Activated CD4-positive, alpha-beta T cell treated with anti-CD3 and anti-CD28 coated beads, Interleukin-2, amount 10 ng/mL, durations not matched to agents 7 days and 5 days (primary cell): ENCODE measurements at regions of chr20 and their contacts with region 1.

Region 1: GRCh38 chr20:45362804-45363610 is at the start of gene SYS1:
- DNase-seq: peak; percentile 99
- H3K4me3 Mint-ChIP-seq: peak within 1 kb of the TSS; percentile 92
- H3K27ac Mint-ChIP-seq: peak within 1 kb of the TSS; percentile 92
- H3K4me1 Mint-ChIP-seq: peaks cover 59% of the 10 kb centered on the region
- H3K27me3 Mint-ChIP-seq: no peaks in the 10 kb centered on the region
- total RNA-seq, gene SYS1: 23.9 to 25.6 TPM

Region 2: DNA sequence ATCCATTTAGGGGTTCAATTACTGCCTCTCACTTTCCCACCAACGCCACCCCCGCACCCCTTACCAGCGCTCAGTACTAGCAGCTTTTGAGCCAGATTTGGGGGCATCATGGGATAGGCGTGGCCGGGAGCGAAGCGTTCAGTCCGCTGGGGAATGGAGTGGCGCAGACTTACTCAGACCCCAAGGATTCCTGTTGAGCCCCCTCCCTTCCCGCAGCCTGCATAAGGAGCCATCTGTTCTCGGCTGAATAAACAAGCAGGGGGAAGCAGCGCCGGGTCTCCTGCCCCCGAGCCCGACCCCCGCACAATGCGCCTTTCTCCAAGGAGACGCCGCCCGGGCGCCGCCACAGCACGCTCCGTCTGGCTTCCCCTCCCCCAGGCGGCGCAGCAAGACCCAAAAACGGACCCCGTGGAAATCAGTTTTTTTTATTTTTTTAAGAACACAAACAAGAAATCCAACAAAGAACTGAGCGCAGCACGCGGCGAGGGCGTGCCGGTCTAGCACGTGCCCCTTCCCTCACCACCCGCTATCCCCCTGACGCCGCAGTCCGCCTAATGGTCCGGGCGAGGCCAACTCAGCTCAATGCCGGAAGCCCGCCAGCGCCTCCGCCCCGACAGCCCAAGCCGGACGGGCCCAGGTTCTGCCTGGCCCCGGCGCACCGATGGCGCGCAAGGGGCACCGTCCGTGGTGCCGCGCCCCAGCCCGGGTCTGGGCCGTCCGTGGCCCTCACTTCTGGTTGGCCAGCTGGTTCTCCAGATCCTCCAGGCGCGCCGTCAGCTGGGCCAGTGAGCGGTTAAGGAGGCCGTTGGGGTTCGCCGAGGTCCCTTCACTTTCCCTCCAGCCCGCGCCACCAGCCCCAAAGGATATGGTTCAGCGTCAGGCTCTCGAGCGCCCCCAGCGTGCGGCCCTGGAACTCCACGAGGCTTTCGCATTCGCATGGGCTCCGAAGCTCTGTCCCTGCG is 69.7 kb before region 1 on chr20:
- CTCF ChIA-PET with region 1: interaction called, 16 read pairs
- POLR2A ChIA-PET with region 1: no interaction called
- DNase-seq: peak; percentile 81
- H3K4me3 Mint-ChIP-seq: peak overlapping the region; percentile 62
- H3K27ac Mint-ChIP-seq: no peak overlapping the region
- H3K4me1 Mint-ChIP-seq: peaks cover 13% of the 10 kb centered on the region
- H3K27me3 Mint-ChIP-seq: peaks cover 36% of the 10 kb centered on the region

Region 3: DNA sequence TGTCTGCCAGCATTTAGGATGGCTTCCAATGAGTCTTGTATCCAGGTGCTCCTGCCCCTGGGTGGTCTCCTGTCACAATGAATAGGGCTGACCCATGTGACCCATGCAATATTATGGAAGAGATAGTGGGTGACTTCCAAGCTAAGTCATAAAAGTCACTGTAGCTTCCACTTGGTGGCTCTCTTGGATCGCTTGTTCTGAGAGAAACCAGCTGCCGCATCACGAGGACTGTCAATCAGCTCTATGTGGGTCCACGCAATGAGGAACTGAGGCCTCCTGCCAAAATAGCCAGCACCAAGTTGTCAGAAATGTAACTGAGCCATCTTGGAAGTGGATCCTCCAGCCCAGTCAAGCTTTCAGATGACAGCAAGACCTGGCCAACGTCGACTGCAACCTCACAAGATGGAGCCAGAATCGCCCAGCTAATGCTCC is 40.0 kb before region 1 on chr20:
- CTCF ChIA-PET with region 1: interaction called, 15 read pairs
- POLR2A ChIA-PET with region 1: interaction called, 3 read pairs
- DNase-seq: no peak
- H3K4me3 Mint-ChIP-seq: no peak overlapping the region
- H3K27ac Mint-ChIP-seq: no peak overlapping the region
- H3K4me1 Mint-ChIP-seq: peaks cover 32% of the 10 kb centered on the region
- H3K27me3 Mint-ChIP-seq: no peaks in the 10 kb centered on the region

Region 4: DNA sequence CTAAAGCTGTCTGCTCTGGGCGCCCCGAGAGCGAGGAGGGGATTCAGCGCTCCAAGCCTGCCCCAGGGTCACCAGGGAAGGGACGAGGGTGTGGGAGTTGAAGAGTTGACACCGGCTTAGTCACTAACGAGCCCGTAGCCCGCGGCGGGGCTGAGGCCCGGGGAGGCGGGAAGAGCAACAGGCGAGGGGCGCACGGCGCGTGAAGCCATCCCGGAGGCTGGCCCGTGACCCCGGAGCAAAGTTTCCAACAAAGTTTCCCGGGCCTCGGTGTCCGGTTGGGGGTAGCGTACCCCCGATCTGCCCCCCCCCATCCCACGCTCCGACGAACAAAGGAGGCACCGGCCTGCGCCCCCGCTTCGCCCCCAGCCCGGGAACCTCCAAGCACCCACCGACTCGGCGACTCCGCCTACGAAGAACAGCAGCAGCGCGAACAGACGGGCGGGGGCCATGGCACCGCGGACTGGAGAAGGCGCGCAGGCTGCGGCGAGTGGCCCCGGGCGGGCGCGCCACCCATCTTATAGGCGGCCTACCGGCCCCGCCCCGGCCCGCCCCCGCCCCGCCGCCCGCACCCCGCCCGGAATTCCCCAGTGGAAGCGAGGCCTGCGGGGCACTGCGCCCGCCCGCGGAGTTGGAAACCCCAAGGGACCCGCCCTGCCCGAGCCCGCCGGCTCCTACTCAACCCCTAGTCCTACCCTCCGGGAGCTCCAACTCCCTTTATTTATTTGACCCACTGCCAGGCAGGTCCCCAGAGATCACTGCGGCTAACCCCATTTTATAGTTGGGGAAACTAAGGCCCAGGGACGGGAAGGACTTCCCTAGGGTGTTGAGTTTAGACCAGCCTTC is 14.8 kb before region 1 on chr20 and contains the start of gene SDC4:
- CTCF ChIA-PET with region 1: interaction called, 30 read pairs
- POLR2A ChIA-PET with region 1: no interaction called
- DNase-seq: peak; percentile 58
- H3K4me3 Mint-ChIP-seq: peak within 1 kb of the TSS; percentile 72
- H3K27ac Mint-ChIP-seq: peak within 1 kb of the TSS; percentile 76
- H3K4me1 Mint-ChIP-seq: peaks cover 30% of the 10 kb centered on the region
- H3K27me3 Mint-ChIP-seq: no peaks in the 10 kb centered on the region
- total RNA-seq, gene SDC4: 7.5 to 8.1 TPM

Region 5: GRCh38 chr20:45410899-45411298 is 47.9 kb after region 1 on chr20:
- CTCF ChIA-PET with region 1: interaction called, 10 read pairs
- POLR2A ChIA-PET with region 1: no interaction called
- DNase-seq: no peak
- H3K4me3 Mint-ChIP-seq: no peak overlapping the region
- H3K27ac Mint-ChIP-seq: no peak overlapping the region
- H3K4me1 Mint-ChIP-seq: peaks cover 18% of the 10 kb centered on the region
- H3K27me3 Mint-ChIP-seq: peaks cover 2% of the 10 kb centered on the region

Region 6: GRCh38 chr20:45518282-45518681 is 155.3 kb after region 1 on chr20:
- CTCF ChIA-PET with region 1: no interaction called
- POLR2A ChIA-PET with region 1: no interaction called
- DNase-seq: no peak
- H3K4me3 Mint-ChIP-seq: no peak overlapping the region
- H3K27ac Mint-ChIP-seq: no peak overlapping the region
- H3K4me1 Mint-ChIP-seq: no peaks in the 10 kb centered on the region
- H3K27me3 Mint-ChIP-seq: peaks cover 32% of the 10 kb centered on the region